ENCODE measurements at regions of chr13 and their contacts with region 1.

Region 1: GRCh38 chr13:30114571-30115256 is 192.6 kb downstream of the KATNAL1 start:
- DNase-seq: peak; percentile 87
- ATAC-seq: peak; percentile 77
- H3K4me3 ChIP-seq: peak overlapping the region; percentile 72
- H3K27ac ChIP-seq: no peak overlapping the region
- H3K4me1 ChIP-seq: peaks cover 25% of the 10 kb centered on the region
- H3K27me3 ChIP-seq: no peaks in the 10 kb centered on the region
- CTCF ChIP-seq: peak; percentile 87

Region 2: DNA sequence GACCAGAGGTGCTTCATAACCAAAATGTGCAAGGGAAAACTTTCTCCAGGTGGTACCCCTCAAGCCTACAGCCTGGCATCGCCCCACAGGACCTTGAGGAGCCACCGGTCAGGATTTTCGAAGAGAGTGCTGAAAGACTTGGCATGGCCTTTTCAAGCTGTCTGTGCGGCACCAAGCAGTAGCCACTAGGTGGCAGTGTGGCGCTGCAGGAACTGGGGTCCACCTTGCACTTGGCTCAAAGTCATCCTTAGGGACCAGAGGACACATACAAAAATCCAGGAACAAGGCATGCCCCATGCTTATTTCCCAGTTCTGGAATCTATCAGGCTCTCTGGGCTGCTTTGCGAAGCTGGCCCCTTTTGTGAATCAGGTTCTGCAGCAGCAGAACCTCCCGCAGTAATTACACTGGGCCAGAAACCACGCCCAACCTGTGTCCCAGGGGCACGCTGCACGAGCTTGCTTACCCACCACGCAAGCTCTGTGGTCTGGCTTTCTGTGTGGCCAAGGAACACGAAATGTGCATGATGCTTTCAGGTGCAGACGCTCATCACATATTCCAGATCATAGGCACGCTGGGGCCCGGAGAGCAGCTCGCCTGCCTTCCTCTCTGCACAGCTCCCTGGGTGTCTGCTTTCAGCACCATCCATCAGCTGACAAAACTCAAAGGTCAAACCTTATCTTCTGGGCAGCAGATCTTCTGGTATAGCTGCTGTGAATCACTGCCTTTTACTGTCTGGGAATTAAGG is 606.4 kb before region 1 on chr13:
- CTCF ChIA-PET with region 1: interaction called, 3 read pairs
- POLR2A ChIA-PET with region 1: no interaction called
- intact Hi-C with region 1: loop called (anchors 2 kb)
- DNase-seq: peak; percentile 86
- ATAC-seq: peak; percentile 88
- H3K4me3 ChIP-seq: no peak overlapping the region
- H3K27ac ChIP-seq: no peak overlapping the region
- H3K4me1 ChIP-seq: 0 out of 2 replicates have a peak, but pooled peaks cover under 1% of the 10 kb centered on the region
- H3K27me3 ChIP-seq: no peaks in the 10 kb centered on the region
- CTCF ChIP-seq: peak; percentile 95

Region 3: GRCh38 chr13:29758531-29759114 is 356.1 kb before region 1 on chr13:
- CTCF ChIA-PET with region 1: interaction called, 3 read pairs
- POLR2A ChIA-PET with region 1: no interaction called
- intact Hi-C with region 1: loop called (anchors 5 kb)
- DNase-seq: peak; percentile 91
- ATAC-seq: peak; percentile 90
- H3K4me3 ChIP-seq: peak overlapping the region; percentile 54; the same call in 1 of the 2 replicates
- H3K27ac ChIP-seq: peak overlapping the region; percentile 97
- H3K4me1 ChIP-seq: peaks cover 32% of the 10 kb centered on the region
- H3K27me3 ChIP-seq: no peaks in the 10 kb centered on the region
- CTCF ChIP-seq: no peak

Region 4: GRCh38 chr13:29771247-29771646 is 343.5 kb before region 1 on chr13:
- CTCF ChIA-PET with region 1: interaction called, 19 read pairs
- POLR2A ChIA-PET with region 1: no interaction called
- intact Hi-C with region 1: loop called (anchors 1 kb)
- DNase-seq: peak; percentile 70
- ATAC-seq: peak; percentile 50
- H3K4me3 ChIP-seq: no peak overlapping the region
- H3K27ac ChIP-seq: no peak overlapping the region
- H3K4me1 ChIP-seq: no peaks in the 10 kb centered on the region
- H3K27me3 ChIP-seq: no peaks in the 10 kb centered on the region
- CTCF ChIP-seq: peak; percentile 73

Region 5: GRCh38 chr13:29850224-29850898 is 264.4 kb before region 1 on chr13 and contains the start of gene UBL3:
- CTCF ChIA-PET with region 1: interaction called, 7 read pairs
- POLR2A ChIA-PET with region 1: interaction called, 3 read pairs
- intact Hi-C with region 1: loop called (anchors 1 kb)
- DNase-seq: peak; percentile 93
- ATAC-seq: peak; percentile 72
- H3K4me3 ChIP-seq: peak within 1 kb of the TSS; percentile 94
- H3K27ac ChIP-seq: peak within 1 kb of the TSS; percentile 82
- H3K4me1 ChIP-seq: peaks cover 40% of the 10 kb centered on the region
- H3K27me3 ChIP-seq: no peaks in the 10 kb centered on the region
- CTCF ChIP-seq: no peak
- total RNA-seq, gene UBL3: 10.9 and 13.9 TPM in 2 replicates

Region 6: DNA sequence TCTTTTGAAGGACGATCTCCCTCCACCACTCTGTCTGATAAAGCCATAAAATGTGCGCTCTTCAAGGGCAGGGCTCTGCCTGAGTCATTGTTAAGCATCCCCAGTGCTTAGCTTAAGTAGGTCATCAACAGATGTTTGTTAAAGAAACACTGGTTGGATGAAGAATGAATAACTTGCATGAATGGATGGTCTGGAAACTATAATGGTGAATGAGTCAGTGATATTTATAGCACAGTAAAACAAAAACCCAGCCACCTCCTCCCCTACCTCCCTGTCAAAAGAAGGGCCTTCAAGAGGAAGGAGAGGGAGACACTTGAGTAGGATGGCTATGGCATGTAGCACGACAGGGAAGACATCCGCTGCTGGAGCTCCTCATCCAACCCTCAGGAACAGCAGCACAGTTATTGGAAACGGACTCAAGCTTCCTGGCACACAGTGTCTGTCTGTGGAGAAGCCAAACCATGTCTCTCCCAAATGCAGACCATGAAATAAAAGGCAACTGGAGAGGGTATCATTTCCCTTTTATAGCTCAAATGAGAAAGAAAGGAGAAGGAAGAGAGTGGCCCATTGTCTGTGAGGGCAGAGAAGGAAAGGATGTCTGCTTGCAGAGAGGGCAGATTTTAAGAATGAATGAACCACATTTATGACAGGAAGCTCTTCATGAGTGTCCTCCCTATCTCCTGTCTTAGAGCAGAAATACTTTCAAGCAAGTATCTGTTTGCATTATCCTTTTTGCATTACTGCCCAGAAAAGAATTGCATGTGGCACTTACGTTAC is 80.8 kb before region 1 on chr13:
- CTCF ChIA-PET with region 1: no interaction called
- POLR2A ChIA-PET with region 1: no interaction called
- intact Hi-C with region 1: loop called (anchors 5 kb)
- DNase-seq: peak; percentile 69
- ATAC-seq: peak; percentile 95
- H3K4me3 ChIP-seq: no peak overlapping the region
- H3K27ac ChIP-seq: 0 out of 2 replicates have a peak overlapping the region, but pooled peaks have one; percentile 27
- H3K4me1 ChIP-seq: peaks cover 17% of the 10 kb centered on the region
- H3K27me3 ChIP-seq: no peaks in the 10 kb centered on the region
- CTCF ChIP-seq: no peak